Common myeloid progenitor, CD34-positive (primary cell): ENCODE measurements at regions of chr19 and their contacts with region 1.

Region 1: GRCh38 chr19:47273313-47273977 is 1.2 kb upstream of the INAFM1 start:
- DNase-seq: peak; percentile 86 to 94 (median 94)
- H3K4me3 ChIP-seq: peak overlapping the region; percentile 68 to 93 (median 86)
- H3K27ac ChIP-seq: peak overlapping the region; percentile 74 to 90
- H3K4me1 ChIP-seq: peaks cover 2 to 32% (median 25%) of the 10 kb centered on the region in 4 experiments
- H3K27me3 ChIP-seq: no peaks in the 10 kb centered on the region

Region 2: DNA sequence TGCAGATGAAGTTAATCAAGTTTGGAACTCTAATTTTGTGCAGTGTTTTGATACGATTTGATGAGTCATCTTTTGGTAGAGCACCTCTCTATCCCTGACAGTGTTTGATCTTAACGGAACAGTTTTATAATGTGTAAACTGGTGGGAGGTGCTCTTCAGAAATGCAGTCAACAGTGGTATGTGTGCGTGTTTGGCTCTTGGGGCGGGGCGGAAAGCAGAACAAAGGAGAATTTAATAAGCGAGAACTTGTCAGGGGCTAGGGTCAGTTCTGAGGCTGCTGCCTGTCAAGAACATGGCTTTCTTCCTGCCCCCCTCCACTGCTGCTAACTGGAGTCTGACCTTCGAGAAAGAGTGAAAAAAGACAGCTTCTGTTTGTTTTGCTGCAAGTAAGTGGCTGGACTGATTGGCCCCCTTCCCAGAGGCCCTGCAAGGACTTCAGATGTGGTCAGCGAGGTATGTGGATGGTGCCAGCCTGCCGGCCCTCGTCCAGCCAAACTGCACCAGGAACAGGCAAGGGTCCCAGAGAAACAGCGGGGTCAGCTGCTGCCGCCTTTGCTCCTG is 83.2 kb before region 1 on chr19:
- CTCF ChIA-PET with region 1: no interaction called
- POLR2A ChIA-PET with region 1: no interaction called
- DNase-seq: no peak
- H3K4me3 ChIP-seq: no peak overlapping the region
- H3K27ac ChIP-seq: no peak overlapping the region
- H3K4me1 ChIP-seq: no peaks in the 10 kb centered on the region
- H3K27me3 ChIP-seq: no peaks in the 10 kb centered on the region

Region 3: GRCh38 chr19:47256688-47257443 is 16.6 kb before region 1 on chr19:
- CTCF ChIA-PET with region 1: interaction called, 12 read pairs
- POLR2A ChIA-PET with region 1: interaction called, 25 read pairs
- DNase-seq: peak; percentile 97 to 99 (median 99)
- H3K4me3 ChIP-seq: peak overlapping the region; percentile 27 to 81 (median 72)
- H3K27ac ChIP-seq: peak overlapping the region; percentile 83 to 93
- H3K4me1 ChIP-seq: peaks cover 4 to 19% (median 15%) of the 10 kb centered on the region in 4 experiments
- H3K27me3 ChIP-seq: no peaks in the 10 kb centered on the region

Region 4: GRCh38 chr19:47284324-47284899 is 11.0 kb after region 1 on chr19:
- CTCF ChIA-PET with region 1: interaction called, 13 read pairs
- POLR2A ChIA-PET with region 1: interaction called, 5 read pairs
- DNase-seq: peak; percentile 69 to 84 (median 73)
- H3K4me3 ChIP-seq: no peak overlapping the region
- H3K27ac ChIP-seq: no peak overlapping the region
- H3K4me1 ChIP-seq: no peaks in the 10 kb centered on the region
- H3K27me3 ChIP-seq: no peaks in the 10 kb centered on the region